GM18951 (cell line): ENCODE measurements at regions of chr20 and their contacts with region 1.

Region 1: GRCh38 chr20:38907918-38908677 is 18.1 kb upstream of the FAM83D start:
- POLR2A ChIP-seq: no peak

Region 2: GRCh38 chr20:38645980-38646858 is 261.9 kb before region 1 on chr20:
- in situ Hi-C with region 1: loop called (anchors 10 kb)
- POLR2A ChIP-seq: no peak